ENCODE measurements at regions of chr22 and their contacts with region 1.

Region 1: DNA sequence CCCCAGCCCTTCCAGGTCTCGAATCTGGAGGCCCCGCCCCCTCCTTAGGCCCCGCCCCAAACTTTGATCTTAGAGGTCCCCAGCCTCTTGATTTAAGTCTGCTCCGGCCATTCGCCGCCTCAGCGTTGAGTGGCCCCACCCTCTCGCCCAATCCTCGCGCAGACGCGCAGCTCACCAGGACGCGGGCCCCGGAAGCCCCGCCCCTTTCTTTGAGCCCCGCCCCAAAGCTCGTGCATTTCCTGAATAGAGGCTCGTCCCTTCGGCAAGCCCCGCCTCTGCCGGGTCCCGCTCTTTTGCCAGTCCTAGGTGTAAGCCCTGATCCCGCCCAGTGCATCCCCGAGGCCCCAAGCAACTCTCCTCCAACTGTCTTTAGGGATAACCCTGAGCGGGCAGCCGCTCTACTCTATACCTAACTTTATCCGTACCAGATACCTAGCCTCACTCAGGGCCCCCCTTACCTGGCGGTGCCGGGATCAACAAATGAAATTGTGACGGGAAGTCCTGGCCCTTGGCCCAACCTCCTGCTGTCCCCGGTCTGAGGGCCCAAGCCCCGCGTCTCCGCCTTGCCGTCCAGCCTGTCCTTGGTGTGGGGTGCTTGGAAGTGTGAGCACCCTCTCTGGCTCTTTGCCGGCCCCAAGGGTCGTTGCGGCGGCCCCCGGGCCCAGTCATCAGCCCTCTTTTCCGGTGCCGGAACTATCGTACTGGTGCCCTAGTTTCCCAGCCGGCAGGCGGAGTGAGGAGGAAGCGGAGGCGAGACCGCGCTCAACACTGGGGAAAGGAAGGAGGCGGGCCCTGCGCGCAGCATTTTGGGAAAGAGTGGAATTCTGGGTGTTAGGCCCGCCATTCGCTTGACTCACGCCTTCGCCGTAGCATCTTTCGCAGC is at the start of gene SNRPD3:
- DNase-seq: peak; percentile 99
- H3K4me3 ChIP-seq: peak within 1 kb of the TSS; percentile 96
- H3K27ac ChIP-seq: peak within 1 kb of the TSS; percentile 87
- H3K4me1 ChIP-seq: peaks cover 65% of the 10 kb centered on the region
- CTCF ChIP-seq: no peak
- total RNA-seq, gene SNRPD3: 264 and 278 TPM in 2 replicates

Region 2: GRCh38 chr22:24339452-24339747 is 216.0 kb before region 1 on chr22:
- CTCF ChIA-PET with region 1: no interaction called
- POLR2A ChIA-PET with region 1: interaction called, 12 read pairs
- intact Hi-C with region 1: no loop called
- DNase-seq: no peak
- H3K4me3 ChIP-seq: no peak overlapping the region
- H3K27ac ChIP-seq: no peak overlapping the region
- H3K4me1 ChIP-seq: no peaks in the 10 kb centered on the region
- CTCF ChIP-seq: no peak